Activated CD4-positive, alpha-beta memory T cell treated with anti-CD3 and anti-CD28 coated beads, Interleukin-2, amount 10 ng/mL, durations not matched to agents 7 days and 5 days (primary cell): ENCODE measurements at regions of chr18 and their contacts with region 1.

Region 1: DNA sequence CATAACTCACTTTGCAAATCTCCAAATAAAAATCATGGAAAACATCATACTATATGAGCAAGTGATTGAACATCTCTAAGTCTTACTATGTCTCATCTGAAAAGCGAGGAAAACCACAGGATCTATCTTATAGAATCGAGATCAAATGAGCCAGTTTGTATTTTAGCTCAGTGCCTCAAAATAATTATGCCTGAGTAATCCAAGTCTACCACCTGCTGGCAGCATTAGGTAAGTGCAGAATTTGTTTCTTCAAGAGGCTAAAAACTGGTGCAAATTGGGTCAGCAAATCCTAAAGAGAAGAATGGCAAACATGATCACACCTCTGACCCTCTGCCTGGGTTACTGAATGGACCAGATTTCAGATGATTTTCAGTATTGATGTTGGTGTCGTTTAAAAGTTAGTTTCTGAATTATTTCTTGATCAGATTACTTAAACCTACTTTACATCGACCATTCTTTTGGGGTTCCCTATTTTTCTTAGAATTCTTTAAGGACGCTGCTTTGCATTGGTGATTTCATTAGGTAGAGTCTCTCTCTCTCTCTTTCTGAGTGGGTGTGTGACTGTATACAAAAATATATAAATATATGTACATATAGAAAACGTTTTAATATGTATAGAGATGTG is 12.7 kb upstream of the FHOD3 start:
- DNase-seq: peak; percentile 40
- H3K4me3 Mint-ChIP-seq: no peak overlapping the region
- H3K27ac Mint-ChIP-seq: no peak overlapping the region
- H3K4me1 Mint-ChIP-seq: peaks cover 1% of the 10 kb centered on the region
- H3K27me3 Mint-ChIP-seq: peaks cover 31% of the 10 kb centered on the region

Region 2: DNA sequence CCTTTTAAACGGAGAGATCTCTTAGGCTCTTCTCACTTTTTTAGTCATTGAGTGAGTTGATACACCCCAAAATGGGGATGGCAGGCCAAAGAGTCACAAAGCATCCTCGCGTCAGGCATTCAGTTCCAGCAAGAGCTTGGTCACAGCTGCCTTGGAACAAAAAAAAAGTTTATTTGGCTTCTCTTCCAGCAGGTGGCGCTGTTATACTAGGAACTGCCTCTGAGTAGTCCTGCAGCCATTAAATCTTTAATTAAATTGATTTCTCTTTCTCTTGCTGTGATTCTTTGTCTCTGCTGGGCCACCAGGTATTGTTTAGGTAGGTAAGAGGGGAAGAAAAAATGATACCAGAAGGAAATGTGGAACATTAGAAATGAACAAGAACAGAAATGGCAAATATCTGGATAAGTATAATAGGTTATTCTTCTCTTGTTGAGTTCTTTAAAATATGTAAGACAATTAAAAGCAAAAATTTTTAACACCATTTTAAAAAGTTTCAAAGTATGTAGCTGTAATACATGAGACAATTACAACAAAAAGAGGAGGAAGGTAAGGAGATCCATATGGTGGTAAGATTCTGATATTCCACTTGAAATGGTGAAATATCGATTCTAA is 528.2 kb before region 1 on chr18:
- CTCF ChIA-PET with region 1: interaction called, 13 read pairs
- POLR2A ChIA-PET with region 1: no interaction called
- DNase-seq: peak; percentile 53
- H3K4me3 Mint-ChIP-seq: no peak overlapping the region
- H3K27ac Mint-ChIP-seq: no peak overlapping the region
- H3K4me1 Mint-ChIP-seq: no peaks in the 10 kb centered on the region
- H3K27me3 Mint-ChIP-seq: peaks cover 21% of the 10 kb centered on the region

Region 3: DNA sequence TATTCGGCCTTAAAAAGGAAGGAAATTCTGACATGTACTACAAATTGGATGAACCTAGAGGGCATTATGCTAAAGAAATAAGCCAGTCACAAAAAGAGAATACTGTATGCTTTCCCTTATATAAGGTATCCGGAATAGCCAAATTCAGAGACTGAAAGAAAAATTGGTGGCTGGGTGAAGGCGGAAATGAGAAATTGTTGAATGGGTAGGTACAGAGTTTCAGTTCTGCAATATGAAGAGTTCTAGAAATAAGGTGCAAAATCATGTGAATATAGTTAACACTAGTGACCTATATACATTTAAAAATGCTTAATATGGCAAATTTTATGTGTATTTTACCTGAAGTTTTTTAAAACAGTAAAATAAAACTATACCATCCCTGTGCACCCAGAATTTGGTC is 269.2 kb before region 1 on chr18:
- CTCF ChIA-PET with region 1: interaction called, 43 read pairs
- POLR2A ChIA-PET with region 1: no interaction called
- DNase-seq: no peak
- H3K4me3 Mint-ChIP-seq: no peak overlapping the region
- H3K27ac Mint-ChIP-seq: no peak overlapping the region
- H3K4me1 Mint-ChIP-seq: no peaks in the 10 kb centered on the region
- H3K27me3 Mint-ChIP-seq: no peaks in the 10 kb centered on the region

Region 4: DNA sequence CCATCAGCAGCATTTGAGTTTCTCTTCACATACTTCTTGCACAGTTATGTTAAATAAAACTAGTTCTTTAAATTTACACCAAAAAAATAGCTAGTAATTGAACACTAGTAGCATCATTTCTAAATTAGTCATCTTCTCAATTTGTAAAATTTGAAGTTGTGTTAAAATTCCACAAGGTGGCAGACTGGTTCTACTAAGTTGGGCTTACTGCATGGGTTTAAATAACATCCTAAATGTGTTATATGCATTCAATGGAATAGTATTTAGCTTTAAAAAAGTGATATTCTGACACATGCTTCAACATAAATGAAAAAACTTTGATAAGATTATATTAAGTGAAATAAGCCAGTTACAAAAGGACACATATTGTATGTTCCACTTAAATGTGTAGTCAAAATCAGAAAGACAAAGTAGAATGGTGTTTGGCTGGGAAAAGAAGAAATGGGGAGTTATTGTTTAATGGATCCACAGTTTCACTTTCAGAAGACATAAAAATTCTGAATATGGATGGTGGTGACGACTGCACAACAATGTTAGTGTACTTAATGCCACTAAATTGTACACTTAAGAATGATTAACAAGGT is 188.8 kb before region 1 on chr18:
- CTCF ChIA-PET with region 1: interaction called, 89 read pairs
- POLR2A ChIA-PET with region 1: no interaction called
- DNase-seq: no peak
- H3K4me3 Mint-ChIP-seq: no peak overlapping the region
- H3K27ac Mint-ChIP-seq: no peak overlapping the region
- H3K4me1 Mint-ChIP-seq: peaks cover 12% of the 10 kb centered on the region
- H3K27me3 Mint-ChIP-seq: peaks cover 8% of the 10 kb centered on the region

Region 5: GRCh38 chr18:36296650-36297416 is 12.1 kb after region 1 on chr18:
- CTCF ChIA-PET with region 1: no interaction called
- POLR2A ChIA-PET with region 1: no interaction called
- DNase-seq: no peak
- H3K4me3 Mint-ChIP-seq: no peak overlapping the region
- H3K27ac Mint-ChIP-seq: no peak overlapping the region
- H3K4me1 Mint-ChIP-seq: no peaks in the 10 kb centered on the region
- H3K27me3 Mint-ChIP-seq: peaks cover 20% of the 10 kb centered on the region

Region 6: GRCh38 chr18:36337679-36338402 is 53.1 kb after region 1 on chr18:
- CTCF ChIA-PET with region 1: no interaction called
- POLR2A ChIA-PET with region 1: no interaction called
- DNase-seq: no peak
- H3K4me3 Mint-ChIP-seq: no peak overlapping the region
- H3K27ac Mint-ChIP-seq: no peak overlapping the region
- H3K4me1 Mint-ChIP-seq: no peaks in the 10 kb centered on the region
- H3K27me3 Mint-ChIP-seq: peaks cover 11% of the 10 kb centered on the region

Region 7: DNA sequence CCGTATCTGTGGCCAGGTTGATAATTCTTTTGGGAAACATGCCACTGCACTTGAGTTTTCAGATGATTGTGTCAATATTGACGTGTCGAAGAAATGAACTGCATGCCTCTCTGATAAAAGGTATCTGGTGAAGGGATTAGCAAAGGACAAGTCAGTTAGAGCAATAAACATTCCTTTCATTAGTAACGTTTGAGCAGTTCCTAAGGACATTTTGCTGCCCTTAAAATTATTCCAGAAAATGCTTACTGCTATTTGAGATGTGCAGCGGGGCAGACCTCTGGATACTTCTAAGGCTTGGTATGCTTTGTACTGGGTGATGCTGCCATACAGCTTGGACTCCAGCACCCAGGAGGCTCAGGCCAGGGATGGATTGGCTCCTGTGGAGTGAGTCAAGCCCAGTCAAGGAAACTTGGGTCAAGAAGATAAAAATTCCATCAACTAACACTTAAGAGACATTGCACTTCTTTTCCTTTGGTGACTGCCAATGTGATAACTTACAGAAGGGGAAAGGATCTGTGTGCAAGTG is 179.4 kb after region 1 on chr18:
- CTCF ChIA-PET with region 1: no interaction called
- POLR2A ChIA-PET with region 1: no interaction called
- DNase-seq: no peak
- H3K4me3 Mint-ChIP-seq: no peak overlapping the region
- H3K27ac Mint-ChIP-seq: no peak overlapping the region
- H3K4me1 Mint-ChIP-seq: no peaks in the 10 kb centered on the region
- H3K27me3 Mint-ChIP-seq: no peaks in the 10 kb centered on the region

Region 8: DNA sequence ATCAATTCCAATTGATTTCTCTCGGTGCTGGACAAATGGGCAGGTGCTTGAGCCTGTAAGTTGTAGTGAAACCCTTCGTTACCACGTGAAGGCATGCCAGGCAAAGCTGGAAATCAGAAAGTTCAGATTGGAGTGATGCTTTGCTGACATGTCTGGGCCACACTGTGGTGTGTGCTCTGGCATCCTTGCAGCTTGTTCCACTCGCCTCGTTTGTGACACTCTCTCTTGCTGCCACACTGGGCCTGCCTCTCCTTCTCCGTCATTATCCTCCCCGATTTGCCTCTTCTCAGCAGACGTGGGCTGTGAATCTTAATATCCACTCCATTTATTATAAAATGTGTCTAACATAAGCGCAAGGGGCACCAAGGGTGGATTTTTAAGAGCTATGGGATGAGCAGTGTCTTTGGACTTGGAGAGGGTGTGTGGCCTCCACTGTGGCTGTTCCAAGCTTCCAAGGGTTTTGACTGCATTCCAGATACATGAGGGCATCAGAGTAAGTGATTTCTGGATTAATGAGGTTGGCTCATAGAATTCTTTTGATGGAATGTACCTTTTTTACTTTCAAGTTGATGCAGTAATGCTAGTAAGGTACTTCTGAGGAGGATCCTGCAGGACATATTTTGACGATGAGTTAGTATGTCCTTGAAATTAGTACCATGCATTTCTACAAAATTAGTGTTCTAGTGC is 305.2 kb after region 1 on chr18:
- CTCF ChIA-PET with region 1: no interaction called
- POLR2A ChIA-PET with region 1: no interaction called
- DNase-seq: no peak
- H3K4me3 Mint-ChIP-seq: no peak overlapping the region
- H3K27ac Mint-ChIP-seq: no peak overlapping the region
- H3K4me1 Mint-ChIP-seq: no peaks in the 10 kb centered on the region
- H3K27me3 Mint-ChIP-seq: no peaks in the 10 kb centered on the region